ENCODE measurements at regions of chr7 and their contacts with region 1.

Region 1: DNA sequence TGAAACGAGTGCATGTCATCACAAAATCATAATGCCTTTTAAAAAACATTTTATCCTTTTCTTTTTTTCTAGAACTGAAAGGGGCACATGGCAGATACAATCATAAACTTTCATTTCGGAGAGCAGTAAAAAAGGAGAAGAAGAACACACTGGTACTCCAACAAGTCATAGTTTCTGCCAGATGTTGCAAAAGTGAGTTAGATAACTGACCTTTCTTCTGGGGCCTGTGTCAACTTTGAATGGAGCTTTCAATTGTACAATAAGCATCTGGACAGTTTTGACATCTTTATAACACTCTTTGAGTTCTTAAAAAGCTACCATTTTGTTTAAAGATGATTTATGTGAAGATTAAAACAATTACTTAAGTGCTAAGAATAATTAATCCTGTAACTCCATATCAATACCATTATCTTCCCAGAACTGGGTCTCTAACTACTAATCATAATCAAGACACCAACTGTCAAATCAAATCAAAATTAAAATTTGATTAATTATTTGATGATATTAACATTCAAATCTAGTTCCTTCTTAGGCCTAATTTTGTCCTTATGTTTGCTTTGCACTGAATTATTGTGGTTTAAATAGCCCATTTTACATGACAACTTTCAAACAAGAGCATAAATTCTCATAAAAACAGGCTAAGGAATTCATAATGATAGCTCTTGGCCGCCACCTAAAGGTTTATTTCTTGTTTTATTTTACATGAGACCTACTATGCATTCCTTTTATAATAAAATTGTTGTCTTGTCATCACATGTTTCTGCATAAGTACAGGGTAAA is 19.5 kb upstream of the ITGB8 start:
- DNase-seq: peak; percentile 76
- H3K4me3 ChIP-seq: no peak overlapping the region
- H3K27ac ChIP-seq: no peak overlapping the region
- H3K4me1 ChIP-seq: peaks cover 19% of the 10 kb centered on the region
- H3K27me3 ChIP-seq: no peaks in the 10 kb centered on the region
- CTCF ChIP-seq: peak; percentile 19 to 26
- POLR2A ChIP-seq: no peak

Region 2: DNA sequence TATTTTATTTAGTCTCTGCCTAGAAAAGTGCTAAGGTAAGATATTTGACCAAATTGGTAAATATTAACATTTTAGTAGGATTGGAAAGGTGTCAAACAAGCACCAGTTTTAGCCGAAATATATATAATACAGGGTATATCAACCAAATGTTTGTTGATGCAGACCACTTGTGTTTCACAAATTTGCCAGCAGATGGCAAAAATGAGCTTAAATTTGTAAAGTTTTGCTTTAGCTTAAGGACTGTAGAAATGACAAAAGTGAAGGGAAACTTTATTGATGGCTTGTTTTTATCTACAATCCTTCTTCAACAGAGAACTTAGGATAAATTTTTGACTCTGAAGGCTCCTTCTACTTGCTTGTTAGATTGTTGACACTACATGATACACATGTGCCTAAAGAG is 597.5 kb before region 1 on chr7:
- CTCF ChIA-PET with region 1: interaction called, 23 read pairs
- POLR2A ChIA-PET with region 1: no interaction called
- dilution Hi-C with region 1: no loop called
- intact Hi-C with region 1: loop called (anchors 1 kb)
- DNase-seq: peak; percentile 62
- H3K4me3 ChIP-seq: no peak overlapping the region
- H3K27ac ChIP-seq: no peak overlapping the region
- H3K4me1 ChIP-seq: no peaks in the 10 kb centered on the region
- H3K27me3 ChIP-seq: peaks cover 10 to 29% of the 10 kb centered on the region in 2 experiments
- CTCF ChIP-seq: peak; percentile 20 to 39
- POLR2A ChIP-seq: no peak

Region 3: DNA sequence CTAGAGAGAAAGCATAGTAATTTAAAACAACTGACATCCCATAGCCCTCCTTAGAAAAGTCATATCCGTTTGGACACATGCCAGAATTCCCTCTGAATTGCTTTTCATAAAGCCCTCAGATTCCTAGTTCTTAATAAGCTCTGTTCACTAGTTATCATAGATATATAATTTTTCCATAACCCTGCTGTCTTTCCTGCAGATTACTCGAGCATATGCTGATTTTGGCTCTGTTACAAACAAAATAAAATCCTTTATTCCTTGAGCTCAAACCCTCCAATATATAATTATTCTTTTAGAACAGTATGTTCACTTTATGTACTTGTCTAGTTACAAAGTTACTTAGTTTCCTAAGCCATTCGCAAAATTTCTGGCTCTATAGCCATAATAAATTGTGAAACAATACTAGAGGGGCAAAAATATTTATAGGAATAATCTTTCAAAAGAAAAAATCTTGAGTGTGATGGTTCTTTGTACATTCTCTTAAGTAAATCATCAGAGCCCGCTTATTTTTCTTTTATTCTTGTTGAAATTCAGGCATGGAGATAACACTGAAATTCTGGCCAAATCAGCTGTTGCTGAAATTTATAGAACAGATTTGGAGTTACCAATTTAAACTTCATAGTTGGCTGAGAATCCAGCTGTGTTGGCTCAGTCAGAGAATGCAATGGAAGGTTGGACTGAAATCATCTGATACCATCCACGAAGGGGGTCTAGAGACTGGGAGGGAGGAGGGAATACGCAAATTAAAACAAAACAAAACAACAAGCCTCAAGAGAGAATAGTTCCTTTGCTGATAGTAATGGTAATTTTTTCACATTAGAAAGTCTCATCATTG is 391.7 kb before region 1 on chr7:
- CTCF ChIA-PET with region 1: interaction called, 3 read pairs
- POLR2A ChIA-PET with region 1: no interaction called
- dilution Hi-C with region 1: no loop called
- intact Hi-C with region 1: loop called (anchors 5 kb)
- DNase-seq: peak; percentile 80
- H3K4me3 ChIP-seq: no peak overlapping the region
- H3K27ac ChIP-seq: peak overlapping the region; percentile 66
- H3K4me1 ChIP-seq: peaks cover 42% of the 10 kb centered on the region
- H3K27me3 ChIP-seq: no peaks in the 10 kb centered on the region
- CTCF ChIP-seq: no peak
- POLR2A ChIP-seq: no peak

Region 4: DNA sequence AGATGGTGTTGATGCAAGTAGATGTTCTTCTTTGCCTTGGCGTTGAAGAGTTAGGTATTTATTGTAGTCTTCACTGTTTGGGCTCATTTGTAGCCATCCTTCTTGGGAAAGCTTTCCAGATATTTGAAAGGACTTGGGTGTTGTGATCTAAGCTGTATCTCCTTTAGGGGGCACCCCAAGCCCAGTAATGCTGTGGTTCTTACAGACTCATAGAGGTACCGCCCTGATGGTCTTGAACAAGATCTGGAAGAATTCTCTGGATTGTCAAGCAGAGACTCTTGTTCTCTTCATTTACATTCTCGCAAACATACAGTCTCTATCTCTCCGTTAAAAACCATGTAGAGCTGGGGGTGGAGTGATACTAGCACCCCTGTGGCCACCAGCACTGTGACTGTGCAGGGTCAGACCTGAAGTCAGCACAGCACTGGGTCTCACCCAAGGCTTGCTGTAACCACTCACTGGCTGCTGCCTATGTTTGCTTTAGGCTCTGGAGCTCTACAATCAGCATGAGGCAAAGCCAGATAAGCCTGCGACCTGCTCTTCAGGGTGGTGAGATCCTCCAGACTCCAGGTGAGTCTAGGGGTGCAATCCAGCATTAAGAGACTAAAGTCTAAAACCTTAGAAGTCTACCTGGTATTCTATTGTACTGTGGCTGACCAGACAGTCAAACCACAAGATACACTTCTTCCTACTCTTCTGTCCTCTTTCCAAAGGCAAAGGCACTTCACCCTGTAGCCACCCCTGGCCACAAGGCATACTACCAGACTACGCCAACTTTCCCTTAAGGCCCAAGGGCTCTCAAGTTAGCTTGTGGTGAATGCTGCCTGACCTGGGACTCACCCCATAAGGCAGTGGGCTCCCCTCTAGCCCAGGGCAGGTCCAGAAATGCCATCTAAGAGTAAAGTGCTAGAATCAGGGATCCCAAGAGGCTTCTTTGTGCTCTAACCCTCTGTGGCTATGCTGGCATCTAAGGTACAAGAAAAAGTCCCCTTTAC is 328.0 kb before region 1 on chr7:
- CTCF ChIA-PET with region 1: interaction called, 7 read pairs
- POLR2A ChIA-PET with region 1: no interaction called
- dilution Hi-C with region 1: no loop called
- intact Hi-C with region 1: loop called (anchors 2 kb)
- DNase-seq: peak; percentile 58
- H3K4me3 ChIP-seq: no peak overlapping the region
- H3K27ac ChIP-seq: no peak overlapping the region
- H3K4me1 ChIP-seq: no peaks in the 10 kb centered on the region
- H3K27me3 ChIP-seq: no peaks in the 10 kb centered on the region
- CTCF ChIP-seq: peak in 1 of 2 donors; percentile 31
- POLR2A ChIP-seq: no peak

Region 5: DNA sequence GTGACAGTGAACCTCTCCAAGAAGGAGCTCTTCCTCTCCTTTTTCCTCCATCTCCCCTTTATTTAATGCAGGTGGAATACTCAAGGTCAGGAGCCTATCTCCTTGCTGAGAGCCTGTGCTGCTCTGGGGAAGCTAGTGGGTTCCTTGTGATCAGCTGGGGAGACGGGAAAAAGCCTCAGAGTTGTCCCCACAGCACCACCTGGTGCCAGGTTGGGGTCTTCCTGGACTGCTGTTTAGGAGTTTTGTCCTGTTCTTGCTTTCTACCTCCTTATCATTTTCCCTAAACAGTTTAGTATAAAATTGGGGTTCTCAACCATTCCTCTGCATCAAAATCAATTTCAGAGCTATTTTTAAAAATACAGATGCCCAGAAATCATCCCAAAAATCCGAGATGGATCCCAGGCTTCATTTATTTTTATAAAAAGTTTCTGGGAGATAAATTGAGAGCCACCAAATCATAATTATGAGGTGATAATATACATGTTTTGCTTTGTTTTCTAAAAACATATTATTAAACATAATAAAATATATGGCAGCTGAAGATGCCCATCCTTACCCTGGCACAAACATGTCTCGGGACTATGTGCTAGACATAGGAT is 138.3 kb before region 1 on chr7:
- CTCF ChIA-PET with region 1: interaction called, 3 read pairs
- POLR2A ChIA-PET with region 1: no interaction called
- dilution Hi-C with region 1: no loop called
- intact Hi-C with region 1: loop called (anchors 2 kb)
- DNase-seq: peak; percentile 51
- H3K4me3 ChIP-seq: no peak overlapping the region
- H3K27ac ChIP-seq: no peak overlapping the region
- H3K4me1 ChIP-seq: no peaks in the 10 kb centered on the region
- H3K27me3 ChIP-seq: no peaks in the 10 kb centered on the region
- CTCF ChIP-seq: peak; percentile 55 to 66
- POLR2A ChIP-seq: no peak

Region 6: DNA sequence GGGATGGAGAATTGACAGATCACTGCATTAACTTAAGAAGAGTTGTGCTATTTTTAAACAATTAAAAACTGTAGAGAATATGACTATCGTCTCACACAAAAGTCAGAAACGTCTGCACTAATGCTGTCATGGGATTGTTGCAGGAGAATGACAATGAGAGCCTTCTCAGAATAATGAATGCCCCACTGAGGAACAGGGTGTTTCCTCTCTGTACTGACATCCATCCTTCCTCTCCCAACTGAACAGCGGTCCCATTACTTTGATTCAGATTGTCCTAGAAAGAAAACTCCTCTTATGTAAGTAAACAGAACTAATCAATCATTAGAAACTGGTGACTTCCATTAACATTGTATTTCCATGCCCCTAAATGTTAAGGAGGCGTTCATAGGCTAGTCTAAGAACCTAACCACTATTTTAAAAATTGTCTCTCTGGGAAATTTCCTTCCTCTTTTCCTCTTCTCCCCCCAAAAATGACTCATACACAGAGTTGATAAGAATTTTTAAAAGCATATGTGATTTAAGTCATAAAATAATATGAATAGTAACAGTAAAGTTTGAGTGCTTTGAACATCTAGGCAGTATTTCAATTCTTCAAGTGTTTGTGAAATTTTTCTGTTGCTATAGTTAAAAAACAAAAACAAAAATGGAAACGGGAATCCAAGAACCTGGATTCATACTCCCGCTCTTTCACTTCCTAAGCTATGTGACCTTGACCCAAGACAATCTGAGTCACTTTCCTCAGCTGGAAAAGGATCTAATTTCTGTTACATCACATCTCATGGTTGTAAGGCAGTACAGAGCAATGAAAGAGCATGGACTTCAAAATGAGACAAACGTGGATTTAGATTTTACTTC is 81.3 kb before region 1 on chr7:
- CTCF ChIA-PET with region 1: interaction called, 3 read pairs
- POLR2A ChIA-PET with region 1: no interaction called
- dilution Hi-C with region 1: no loop called
- intact Hi-C with region 1: loop called (anchors 1 kb)
- DNase-seq: peak; percentile 95
- H3K4me3 ChIP-seq: no peak overlapping the region
- H3K27ac ChIP-seq: peak overlapping the region; percentile 99
- H3K4me1 ChIP-seq: peaks cover 20% of the 10 kb centered on the region
- H3K27me3 ChIP-seq: no peaks in the 10 kb centered on the region
- CTCF ChIP-seq: no peak
- POLR2A ChIP-seq: no peak

Region 7: DNA sequence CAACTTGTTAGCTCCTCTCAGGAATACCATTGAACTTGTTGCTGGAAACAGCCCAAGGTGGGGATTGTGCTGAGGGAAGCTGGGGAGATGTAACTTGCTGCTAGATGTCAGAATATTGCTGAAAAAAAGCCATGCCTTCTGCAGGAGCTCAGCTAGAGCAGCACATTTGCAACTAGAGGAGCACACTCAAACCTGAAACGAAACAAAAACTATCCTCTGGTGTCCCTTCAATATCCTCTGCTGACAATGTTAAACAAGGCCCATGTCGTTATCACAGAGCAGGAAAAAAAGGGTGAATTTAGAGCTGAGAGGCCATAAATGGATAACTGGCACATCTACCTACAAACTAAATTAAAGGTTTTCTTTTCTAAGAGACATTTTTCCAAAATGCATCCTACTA is 40.3 kb before region 1 on chr7:
- CTCF ChIA-PET with region 1: no interaction called
- POLR2A ChIA-PET with region 1: no interaction called
- dilution Hi-C with region 1: no loop called
- intact Hi-C with region 1: no loop called
- DNase-seq: no peak
- H3K4me3 ChIP-seq: no peak overlapping the region
- H3K27ac ChIP-seq: no peak overlapping the region
- H3K4me1 ChIP-seq: no peaks in the 10 kb centered on the region
- H3K27me3 ChIP-seq: no peaks in the 10 kb centered on the region
- CTCF ChIP-seq: no peak
- POLR2A ChIP-seq: no peak

Region 8: GRCh38 chr7:20491284-20491683 is 180.1 kb after region 1 on chr7:
- CTCF ChIA-PET with region 1: no interaction called
- POLR2A ChIA-PET with region 1: no interaction called
- dilution Hi-C with region 1: no loop called
- intact Hi-C with region 1: no loop called
- DNase-seq: no peak
- H3K4me3 ChIP-seq: no peak overlapping the region
- H3K27ac ChIP-seq: no peak overlapping the region
- H3K4me1 ChIP-seq: no peaks in the 10 kb centered on the region
- H3K27me3 ChIP-seq: no peaks in the 10 kb centered on the region
- CTCF ChIP-seq: no peak
- POLR2A ChIP-seq: no peak

Region 9: GRCh38 chr7:20539201-20539600 is 228.0 kb after region 1 on chr7:
- CTCF ChIA-PET with region 1: no interaction called
- POLR2A ChIA-PET with region 1: no interaction called
- dilution Hi-C with region 1: no loop called
- intact Hi-C with region 1: no loop called
- DNase-seq: no peak
- H3K4me3 ChIP-seq: no peak overlapping the region
- H3K27ac ChIP-seq: no peak overlapping the region
- H3K4me1 ChIP-seq: peaks cover 5% of the 10 kb centered on the region
- H3K27me3 ChIP-seq: no peaks in the 10 kb centered on the region
- CTCF ChIP-seq: no peak
- POLR2A ChIP-seq: no peak

Region 10: DNA sequence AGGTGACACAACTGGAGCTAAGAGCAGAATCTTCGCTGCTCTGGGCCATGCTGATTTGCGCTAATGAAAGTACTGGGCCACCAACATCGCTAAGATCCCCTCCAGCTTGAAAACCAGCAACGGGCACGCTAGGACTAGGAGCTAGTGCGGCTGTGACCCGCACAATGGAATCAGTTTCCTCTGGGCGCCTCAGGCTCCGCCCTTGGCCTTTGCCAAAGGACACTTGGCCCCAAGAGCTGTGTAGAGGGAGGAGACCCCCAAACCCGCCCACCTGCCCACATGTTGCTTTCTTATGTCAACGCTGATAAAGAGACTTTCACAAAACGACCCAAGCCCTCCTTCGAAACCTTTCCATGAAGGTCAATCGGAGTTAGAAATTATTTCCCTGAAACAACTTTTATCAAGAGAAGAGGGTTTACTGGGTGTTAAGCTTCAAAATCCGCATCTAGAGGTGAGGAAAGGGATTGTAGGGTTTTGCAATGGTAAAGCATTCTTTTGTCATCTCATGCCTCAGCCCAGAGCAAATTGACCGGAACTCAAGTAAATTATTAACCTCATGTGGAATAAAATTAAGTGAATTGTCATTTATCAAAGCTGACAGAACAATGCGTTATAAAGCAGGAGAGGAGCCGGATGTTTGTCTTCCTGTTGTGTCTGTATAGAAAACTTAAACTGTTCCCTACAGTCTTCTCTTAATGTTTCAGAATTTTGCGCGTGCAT is 313.7 kb after region 1 on chr7:
- CTCF ChIA-PET with region 1: no interaction called
- POLR2A ChIA-PET with region 1: no interaction called
- dilution Hi-C with region 1: no loop called
- intact Hi-C with region 1: no loop called
- DNase-seq: no peak
- H3K4me3 ChIP-seq: no peak overlapping the region
- H3K27ac ChIP-seq: no peak overlapping the region
- H3K4me1 ChIP-seq: no peaks in the 10 kb centered on the region
- H3K27me3 ChIP-seq: no peaks in the 10 kb centered on the region
- CTCF ChIP-seq: no peak
- POLR2A ChIP-seq: no peak